OCI-LY7 (cell line): ENCODE measurements at regions of chr7 and their contacts with region 1.

Region 1: GRCh38 chr7:116305485-116306408 is 95.4 kb downstream of the TES start:
- DNase-seq: no peak
- H3K4me3 ChIP-seq: no peak overlapping the region
- H3K27ac ChIP-seq: no peak overlapping the region
- H3K4me1 ChIP-seq: no peaks in the 10 kb centered on the region
- CTCF ChIP-seq: no peak

Region 2: GRCh38 chr7:116290740-116291139 is 15.0 kb before region 1 on chr7:
- CTCF ChIA-PET with region 1: no interaction called
- POLR2A ChIA-PET with region 1: interaction called, 4 read pairs
- intact Hi-C with region 1: loop called (anchors 1 kb)
- DNase-seq: no peak
- H3K4me3 ChIP-seq: no peak overlapping the region
- H3K27ac ChIP-seq: no peak overlapping the region
- H3K4me1 ChIP-seq: no peaks in the 10 kb centered on the region
- CTCF ChIP-seq: no peak